ENCODE measurements at regions of chr11 and their contacts with region 1.

Region 1: GRCh38 chr11:61477727-61478148 is 30.8 kb upstream of the LRRC10B start:
- DNase-seq: peak; percentile 35 to 38
- H3K4me3 ChIP-seq: no peak overlapping the region
- H3K27ac ChIP-seq: no peak overlapping the region
- H3K4me1 ChIP-seq: peaks cover 0 to 17% of the 10 kb centered on the region in 2 donors
- H3K27me3 ChIP-seq: no peaks in the 10 kb centered on the region
- CTCF ChIP-seq: peak; percentile 76 to 98 (median 88)
- POLR2A ChIP-seq: no peak

Region 2: GRCh38 chr11:61516675-61517572 is 39.2 kb after region 1 on chr11:
- intact Hi-C with region 1: loop called (anchors 2 kb)
- DNase-seq: peak in 1 of 2 donors; percentile 29
- H3K4me3 ChIP-seq: no peak overlapping the region
- H3K27ac ChIP-seq: no peak overlapping the region
- H3K4me1 ChIP-seq: no peaks in the 10 kb centered on the region
- H3K27me3 ChIP-seq: no peaks in the 10 kb centered on the region
- CTCF ChIP-seq: peak; percentile 87 to 95 (median 90)
- POLR2A ChIP-seq: no peak

Region 3: DNA sequence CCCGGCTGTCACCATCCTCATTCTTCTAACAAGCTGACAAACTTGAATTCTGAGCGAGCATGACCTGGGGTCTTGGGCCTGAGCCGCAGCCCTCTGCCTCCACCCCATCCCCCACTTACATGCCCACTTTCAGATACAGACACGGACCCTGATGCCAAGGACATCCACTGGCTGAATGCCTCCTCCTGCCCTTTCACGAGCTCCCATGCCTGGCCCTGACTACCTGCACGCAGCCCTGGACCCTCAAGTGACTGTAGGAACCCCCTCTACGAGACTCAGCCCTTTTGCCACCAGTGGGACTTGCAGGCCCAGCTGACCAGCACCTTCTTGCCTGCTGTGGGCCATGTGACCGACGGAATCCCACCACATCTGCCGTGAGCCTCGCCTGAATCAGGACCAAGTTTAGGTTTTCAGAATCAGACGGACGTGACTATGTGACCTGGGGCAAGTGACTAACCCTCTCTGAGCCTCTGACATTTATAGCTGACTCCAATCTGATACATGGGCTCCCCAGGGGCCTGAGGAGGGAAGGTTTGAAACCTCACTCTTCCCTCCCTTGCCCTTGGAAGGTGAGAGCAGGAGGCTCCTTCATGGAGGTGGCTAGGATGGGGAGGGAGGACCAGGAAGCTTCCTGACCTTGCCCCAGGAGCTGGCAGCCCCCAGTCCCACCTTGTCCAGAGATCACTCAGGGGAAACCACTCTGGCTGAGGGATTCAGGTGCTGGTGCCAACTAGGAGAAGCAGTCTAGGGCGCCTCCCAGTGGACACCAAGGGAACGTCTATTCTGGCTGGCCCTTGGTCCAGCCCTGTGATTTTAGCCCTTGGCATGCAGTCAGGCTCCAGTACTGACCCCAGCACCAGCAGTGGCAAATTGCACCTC is 150.1 kb after region 1 on chr11:
- intact Hi-C with region 1: loop called (anchors 2 kb)
- DNase-seq: peak; percentile 81 to 82
- H3K4me3 ChIP-seq: no peak overlapping the region
- H3K27ac ChIP-seq: peak overlapping the region in 2 of 3 donors; percentile 20 to 56
- H3K4me1 ChIP-seq: peaks cover 0 to 16% of the 10 kb centered on the region in 2 donors
- H3K27me3 ChIP-seq: no peaks in the 10 kb centered on the region
- CTCF ChIP-seq: peak; percentile 60 to 93 (median 84)
- POLR2A ChIP-seq: no peak